Activated CD8-positive, alpha-beta T cell treated with anti-CD3 and anti-CD28 coated beads for 36 hours (primary cell): ENCODE measurements at regions of chr5 and their contacts with region 1.

Region 1: DNA sequence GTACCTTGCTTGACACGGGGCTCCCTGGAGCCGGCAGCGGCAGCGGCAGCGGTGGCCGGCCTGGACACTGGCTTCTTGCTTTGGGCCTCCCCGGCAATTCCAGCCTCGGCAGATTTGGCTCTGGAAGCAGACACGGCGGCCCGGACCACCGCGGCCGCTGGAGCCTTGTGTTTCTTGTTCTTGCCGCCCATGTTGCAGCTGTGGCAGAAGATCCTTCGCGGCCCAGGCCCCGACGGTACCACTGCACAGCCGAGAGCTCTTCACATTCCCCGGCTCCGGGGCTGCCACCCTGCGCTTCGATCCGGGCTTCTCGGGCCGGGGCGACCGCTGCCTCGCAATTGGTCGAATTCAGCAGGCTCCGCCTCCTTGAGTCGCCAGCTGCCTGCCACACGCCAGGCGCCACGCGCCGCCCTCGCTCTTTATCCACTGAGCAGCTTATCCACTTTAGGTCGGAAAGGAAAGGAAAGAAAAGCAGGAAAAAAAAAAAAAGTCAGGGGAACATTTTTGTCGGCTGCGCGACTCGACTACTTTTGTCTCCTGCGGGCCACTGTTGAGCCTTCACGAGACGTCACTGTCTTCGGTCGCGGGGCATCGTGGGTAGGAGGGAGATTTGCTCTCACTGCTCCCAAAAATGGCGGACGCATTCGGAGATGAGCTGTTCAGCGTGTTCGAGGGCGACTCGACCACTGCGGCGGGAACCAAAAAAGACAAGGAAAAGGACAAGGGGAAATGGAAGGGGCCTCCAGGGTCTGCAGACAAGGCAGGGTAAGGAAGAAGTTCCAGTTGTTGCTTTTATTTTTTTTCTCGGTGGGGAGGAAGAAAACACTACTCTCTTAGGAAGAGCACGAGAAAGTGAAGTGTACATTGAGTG is at the starts of genes DHX29 and MTREX:
- DNase-seq: peak; percentile 91
- ATAC-seq: peak; percentile 93
- H3K4me3 Mint-ChIP-seq: no peak within 1 kb of the TSS
- H3K27ac Mint-ChIP-seq: no peak within 1 kb of the TSS
- H3K4me1 Mint-ChIP-seq: peaks cover 33% of the 10 kb centered on the region
- H3K27me3 Mint-ChIP-seq: no peaks in the 10 kb centered on the region
- CTCF ChIP-seq: no peak
- total RNA-seq, gene DHX29: 11.6 to 13.7 TPM
- total RNA-seq, gene MTREX: 88.9 to 93.4 TPM

Region 2: DNA sequence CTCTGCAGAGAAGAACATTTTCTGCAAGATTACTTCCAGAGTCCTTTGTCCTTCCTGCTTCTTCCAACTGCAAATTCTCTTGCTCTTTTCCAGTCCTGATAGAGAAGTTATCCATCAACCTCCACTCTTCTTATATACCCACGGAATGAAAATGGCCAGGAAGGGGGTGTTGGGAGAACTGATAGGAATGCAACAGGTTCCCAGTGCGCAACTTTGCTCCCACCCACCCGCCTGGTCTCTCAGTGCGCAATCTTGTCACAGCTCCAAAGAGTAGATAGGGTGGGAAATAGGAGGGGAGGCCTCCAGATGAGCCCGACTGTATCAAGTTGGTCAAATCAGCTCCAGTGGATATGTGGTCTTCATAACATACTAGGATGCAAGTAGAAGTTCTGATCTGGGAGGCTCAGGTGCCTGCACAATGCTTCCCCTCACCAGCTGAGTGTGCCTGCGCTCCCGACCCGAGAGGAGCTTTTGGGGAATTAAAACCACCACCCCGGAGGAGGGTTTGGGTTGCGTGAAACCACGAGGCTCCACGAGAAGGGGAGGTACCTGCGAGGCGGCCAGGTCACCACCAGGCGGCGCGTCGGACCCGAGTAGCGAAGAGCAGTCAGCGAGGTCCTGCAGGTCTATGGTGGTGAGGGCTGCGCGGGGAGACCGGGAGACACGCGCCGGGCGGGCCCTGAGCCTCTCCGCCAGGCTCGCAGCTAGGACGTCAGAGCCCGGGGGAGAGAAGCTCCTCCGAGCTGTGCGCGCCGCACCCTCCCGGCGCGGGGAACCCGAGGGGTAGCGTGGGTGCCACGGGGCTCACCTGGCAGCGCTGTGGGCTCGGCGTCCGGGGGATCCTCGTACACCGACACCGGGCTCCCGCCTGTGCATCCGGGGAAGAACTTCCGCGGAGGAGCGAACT is 81.3 kb before region 1 on chr5:
- CTCF ChIA-PET with region 1: interaction called, 12 read pairs
- POLR2A ChIA-PET with region 1: interaction called, 6 read pairs
- intact Hi-C with region 1: loop called (anchors 5 kb)
- DNase-seq: peak; percentile 87
- ATAC-seq: peak; percentile 76
- H3K4me3 Mint-ChIP-seq: peak overlapping the region; percentile 51
- H3K27ac Mint-ChIP-seq: no peak overlapping the region
- H3K4me1 Mint-ChIP-seq: peaks cover 28% of the 10 kb centered on the region
- H3K27me3 Mint-ChIP-seq: peaks cover 83% of the 10 kb centered on the region
- CTCF ChIP-seq: peak; percentile 84

Region 3: GRCh38 chr5:55290991-55291390 is 16.6 kb before region 1 on chr5:
- CTCF ChIA-PET with region 1: interaction called, 13 read pairs
- POLR2A ChIA-PET with region 1: no interaction called
- intact Hi-C with region 1: no loop called
- DNase-seq: no peak
- ATAC-seq: no peak
- H3K4me3 Mint-ChIP-seq: no peak overlapping the region
- H3K27ac Mint-ChIP-seq: no peak overlapping the region
- H3K4me1 Mint-ChIP-seq: no peaks in the 10 kb centered on the region
- H3K27me3 Mint-ChIP-seq: no peaks in the 10 kb centered on the region
- CTCF ChIP-seq: no peak